Upper lobe of right lung (tissue), 1 donor: ENCODE measurements at regions of chr17 and their contacts with region 1.

Region 1: GRCh38 chr17:4540224-4540641 is 15.0 kb downstream of the MYBBP1A start:
- DNase-seq: no peak
- ATAC-seq: no peak
- H3K4me3 ChIP-seq: no peak overlapping the region
- H3K27ac ChIP-seq: peak overlapping the region; percentile 17
- H3K4me1 ChIP-seq: peaks cover 20% of the 10 kb centered on the region
- H3K27me3 ChIP-seq: no peaks in the 10 kb centered on the region
- CTCF ChIP-seq: peak; percentile 25

Region 2: GRCh38 chr17:4287710-4288109 is 252.5 kb before region 1 on chr17:
- intact Hi-C with region 1: no loop called
- DNase-seq: no peak
- ATAC-seq: no peak
- H3K4me3 ChIP-seq: no peak overlapping the region
- H3K27ac ChIP-seq: no peak overlapping the region
- H3K4me1 ChIP-seq: no peaks in the 10 kb centered on the region
- H3K27me3 ChIP-seq: no peaks in the 10 kb centered on the region
- CTCF ChIP-seq: no peak

Region 3: DNA sequence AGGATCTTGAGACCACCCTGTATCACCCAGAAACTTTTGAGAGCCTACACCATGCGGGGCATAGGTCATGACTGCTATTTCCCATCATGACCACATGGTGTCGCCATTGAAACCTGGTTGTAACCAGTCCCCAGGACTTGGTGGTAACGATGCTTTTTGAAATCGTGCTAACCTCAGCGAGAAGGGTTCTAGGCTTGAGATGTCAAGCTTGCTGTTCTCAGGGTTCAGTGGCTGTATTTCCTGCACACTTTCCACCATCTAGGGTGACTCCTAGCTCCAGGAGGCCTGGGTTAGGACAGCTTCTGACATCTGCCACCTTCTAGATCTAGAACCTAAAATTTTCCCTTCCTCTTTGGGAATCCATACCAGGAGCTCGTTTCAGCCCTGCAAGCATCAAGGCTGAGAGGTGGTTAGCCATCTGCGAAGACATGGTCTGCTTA is 119.5 kb before region 1 on chr17:
- intact Hi-C with region 1: loop called (anchors 10 kb)
- DNase-seq: no peak
- ATAC-seq: peak; percentile 96
- H3K4me3 ChIP-seq: no peak overlapping the region
- H3K27ac ChIP-seq: no peak overlapping the region
- H3K4me1 ChIP-seq: no peaks in the 10 kb centered on the region
- H3K27me3 ChIP-seq: no peaks in the 10 kb centered on the region
- CTCF ChIP-seq: peak; percentile 86